GM23248 (cell line): ENCODE measurements at regions of chr4 and their contacts with region 1.

Region 1: DNA sequence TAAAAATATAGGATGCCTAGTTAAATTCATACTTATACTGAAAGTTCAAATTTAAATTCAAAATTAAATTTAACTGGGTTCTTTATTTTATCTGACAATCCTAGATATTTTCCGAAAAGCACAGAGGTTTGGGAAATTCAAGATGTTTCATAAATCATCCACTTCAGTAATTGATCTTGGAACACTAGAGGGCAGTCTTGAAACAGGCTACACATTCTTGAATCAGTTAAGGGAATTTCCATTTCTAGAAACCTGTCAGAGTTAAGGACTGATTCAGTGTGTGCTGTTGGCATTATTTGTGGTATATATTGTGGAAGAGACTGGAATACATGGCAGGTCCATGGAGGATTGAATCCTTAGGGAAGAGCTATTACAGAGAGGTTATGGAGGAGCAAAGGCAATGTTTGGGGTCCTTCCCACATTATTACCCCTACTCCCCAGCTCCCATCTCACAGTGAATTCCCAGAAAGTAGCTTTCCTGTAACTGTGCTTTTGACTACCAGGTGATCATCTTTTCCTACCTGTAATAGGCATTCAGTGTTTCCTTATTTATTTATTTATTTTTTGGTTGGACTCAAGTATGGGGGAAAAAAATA is 92.9 kb downstream of the EGF start:
- DNase-seq: peak; percentile 77
- H3K4me3 ChIP-seq: no peak overlapping the region
- H3K27ac ChIP-seq: no peak overlapping the region
- H3K4me1 ChIP-seq: no peaks in the 10 kb centered on the region
- H3K27me3 ChIP-seq: no peaks in the 10 kb centered on the region

Region 2: GRCh38 chr4:109787807-109788206 is 217.8 kb before region 1 on chr4:
- in situ Hi-C with region 1: no loop called
- DNase-seq: no peak
- H3K4me3 ChIP-seq: no peak overlapping the region
- H3K27ac ChIP-seq: no peak overlapping the region
- H3K4me1 ChIP-seq: no peaks in the 10 kb centered on the region
- H3K27me3 ChIP-seq: no peaks in the 10 kb centered on the region

Region 3: GRCh38 chr4:109890076-109890475 is 115.5 kb before region 1 on chr4:
- in situ Hi-C with region 1: no loop called
- DNase-seq: no peak
- H3K4me3 ChIP-seq: no peak overlapping the region
- H3K27ac ChIP-seq: no peak overlapping the region
- H3K4me1 ChIP-seq: no peaks in the 10 kb centered on the region
- H3K27me3 ChIP-seq: no peaks in the 10 kb centered on the region

Region 4: GRCh38 chr4:110201502-110201901 is 195.9 kb after region 1 on chr4:
- in situ Hi-C with region 1: loop called (anchors 10 kb)
- DNase-seq: no peak
- H3K4me3 ChIP-seq: no peak overlapping the region
- H3K27ac ChIP-seq: no peak overlapping the region
- H3K4me1 ChIP-seq: no peaks in the 10 kb centered on the region
- H3K27me3 ChIP-seq: no peaks in the 10 kb centered on the region

Region 5: GRCh38 chr4:110310795-110311194 is 305.2 kb after region 1 on chr4:
- in situ Hi-C with region 1: loop called (anchors 25 kb)
- DNase-seq: no peak
- H3K4me3 ChIP-seq: no peak overlapping the region
- H3K27ac ChIP-seq: no peak overlapping the region
- H3K4me1 ChIP-seq: no peaks in the 10 kb centered on the region
- H3K27me3 ChIP-seq: peaks cover 9% of the 10 kb centered on the region; the same call in 1 of the 2 replicates

Region 6: GRCh38 chr4:110970642-110971041 is 965.1 kb after region 1 on chr4:
- in situ Hi-C with region 1: loop called (anchors 25 kb)
- DNase-seq: peak; percentile 51
- H3K4me3 ChIP-seq: no peak overlapping the region
- H3K27ac ChIP-seq: no peak overlapping the region
- H3K4me1 ChIP-seq: 0 out of 2 replicates have a peak, but pooled peaks cover 6% of the 10 kb centered on the region
- H3K27me3 ChIP-seq: no peaks in the 10 kb centered on the region

Region 7: GRCh38 chr4:111641955-111642579 is 1636.5 kb after region 1 on chr4:
- in situ Hi-C with region 1: loop called (anchors 25 kb)
- DNase-seq: peak; percentile 95
- H3K4me3 ChIP-seq: no peak overlapping the region
- H3K27ac ChIP-seq: no peak overlapping the region
- H3K4me1 ChIP-seq: peaks cover 31% of the 10 kb centered on the region
- H3K27me3 ChIP-seq: no peaks in the 10 kb centered on the region